Panc1 (cell line): ENCODE measurements at regions of chr17 and their contacts with region 1.

Region 1: GRCh38 chr17:41511709-41512108 is 6.3 kb upstream of the KRT13 start:
- DNase-seq: no peak
- ATAC-seq: no peak
- H3K4me3 ChIP-seq: no peak overlapping the region
- H3K27ac ChIP-seq: peak overlapping the region; percentile 57; the same call in 1 of the 2 replicates
- H3K4me1 ChIP-seq: peaks cover 22% of the 10 kb centered on the region
- H3K27me3 ChIP-seq: no peaks in the 10 kb centered on the region
- CTCF ChIP-seq: no peak

Region 2: DNA sequence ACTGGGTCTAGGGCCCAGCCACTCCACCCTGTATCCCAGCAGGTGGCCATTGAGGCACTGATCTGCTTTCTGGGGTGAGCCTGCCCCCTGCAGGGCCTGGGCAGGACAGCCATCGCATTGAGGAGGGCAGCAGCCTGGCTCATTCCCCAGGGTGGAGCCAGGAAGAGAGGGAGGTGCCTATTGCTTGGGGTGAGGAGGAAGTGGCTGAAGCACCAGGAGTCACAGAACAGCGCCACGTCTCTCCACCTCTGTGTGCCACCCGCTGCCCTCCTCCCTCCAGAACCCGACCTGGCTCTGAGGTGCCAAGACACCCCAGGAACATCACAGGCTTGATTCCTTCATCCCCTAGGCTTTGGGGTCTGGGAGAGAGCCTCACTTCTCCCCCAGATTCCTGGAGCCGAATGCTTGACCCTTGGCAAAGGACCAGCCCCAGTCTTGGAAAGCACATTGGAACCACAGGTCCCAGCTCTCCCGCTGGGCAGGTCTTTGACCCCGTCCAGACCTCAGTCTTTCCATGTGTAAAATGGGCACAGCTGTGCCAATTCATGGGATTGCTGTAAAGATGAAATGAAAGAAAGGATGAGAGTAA is 14.8 kb before region 1 on chr17:
- CTCF ChIA-PET with region 1: no interaction called
- POLR2A ChIA-PET with region 1: interaction called, 13 read pairs
- in situ Hi-C with region 1: no loop called
- intact Hi-C with region 1: no loop called
- DNase-seq: no peak
- ATAC-seq: peak; percentile 88
- H3K4me3 ChIP-seq: no peak overlapping the region
- H3K27ac ChIP-seq: peak overlapping the region; percentile 78
- H3K4me1 ChIP-seq: peaks cover 28% of the 10 kb centered on the region
- H3K27me3 ChIP-seq: no peaks in the 10 kb centered on the region
- CTCF ChIP-seq: peak; percentile 85